ENCODE measurements at regions of chr16 and their contacts with region 1.

Region 1: GRCh38 chr16:88856828-88857733 is at the starts of genes GALNS and TRAPPC2L:
- DNase-seq: peak; percentile 100
- ATAC-seq: peak; percentile 93
- H3K4me3 Mint-ChIP-seq: peak within 1 kb of the TSS; percentile 100
- H3K27ac Mint-ChIP-seq: peak within 1 kb of the TSS; percentile 97
- H3K4me1 Mint-ChIP-seq: peaks cover 22% of the 10 kb centered on the region
- H3K27me3 Mint-ChIP-seq: no peaks in the 10 kb centered on the region
- total RNA-seq, gene GALNS: 20.1 TPM
- total RNA-seq, gene TRAPPC2L: 43.3 to 50.7 TPM

Region 2: GRCh38 chr16:88650749-88651275 is 206.3 kb before region 1 on chr16 and contains the start of gene CYBA:
- CTCF ChIA-PET with region 1: no interaction called
- POLR2A ChIA-PET with region 1: no interaction called
- intact Hi-C with region 1: loop called in 1 of 2 experiments (anchors 1 kb)
- DNase-seq: peak; percentile 92
- ATAC-seq: peak; percentile 87
- H3K4me3 Mint-ChIP-seq: peak within 1 kb of the TSS; percentile 85
- H3K27ac Mint-ChIP-seq: peak within 1 kb of the TSS; percentile 93
- H3K4me1 Mint-ChIP-seq: peaks cover 15% of the 10 kb centered on the region
- H3K27me3 Mint-ChIP-seq: no peaks in the 10 kb centered on the region
- total RNA-seq, gene CYBA: 155 to 200 TPM

Region 3: GRCh38 chr16:88737298-88738150 is 119.6 kb before region 1 on chr16:
- CTCF ChIA-PET with region 1: interaction called, 13 read pairs
- POLR2A ChIA-PET with region 1: no interaction called
- intact Hi-C with region 1: loop called in 1 of 2 experiments (anchors 2 kb)
- DNase-seq: peak; percentile 89
- ATAC-seq: peak; percentile 91
- H3K4me3 Mint-ChIP-seq: no peak overlapping the region
- H3K27ac Mint-ChIP-seq: no peak overlapping the region
- H3K4me1 Mint-ChIP-seq: no peaks in the 10 kb centered on the region
- H3K27me3 Mint-ChIP-seq: no peaks in the 10 kb centered on the region

Region 4: DNA sequence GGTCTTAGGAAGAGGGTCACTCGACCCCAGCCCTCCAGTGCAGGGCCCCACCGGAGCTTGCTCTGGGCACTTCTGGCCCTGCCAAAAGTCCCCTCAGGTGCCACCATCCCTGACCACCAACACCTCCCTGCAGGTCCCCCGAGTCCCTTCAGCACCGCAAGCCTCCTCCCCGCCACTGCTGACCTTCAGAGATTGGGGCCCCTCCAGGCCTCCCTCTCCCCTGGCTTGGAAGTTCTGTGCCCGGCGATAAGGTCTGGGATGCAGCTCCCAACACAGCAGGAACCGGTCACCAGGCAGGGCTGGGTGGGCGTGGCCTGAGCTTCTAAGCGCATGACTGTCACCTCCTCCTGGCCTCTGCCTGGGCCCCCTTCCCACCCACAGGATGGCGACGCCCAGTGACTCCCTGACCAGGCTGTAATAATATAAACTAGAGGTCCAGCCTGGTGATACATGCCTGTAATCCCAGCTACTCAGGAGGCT is 83.2 kb before region 1 on chr16:
- CTCF ChIA-PET with region 1: no interaction called
- POLR2A ChIA-PET with region 1: no interaction called
- intact Hi-C with region 1: no loop called
- DNase-seq: no peak
- ATAC-seq: no peak
- H3K4me3 Mint-ChIP-seq: no peak overlapping the region
- H3K27ac Mint-ChIP-seq: no peak overlapping the region
- H3K4me1 Mint-ChIP-seq: peaks cover 23% of the 10 kb centered on the region
- H3K27me3 Mint-ChIP-seq: no peaks in the 10 kb centered on the region

Region 5: GRCh38 chr16:88811769-88812512 is 45.1 kb before region 1 on chr16 and contains the start of gene APRT:
- CTCF ChIA-PET with region 1: interaction called, 22 read pairs
- POLR2A ChIA-PET with region 1: interaction called, 5 read pairs
- intact Hi-C with region 1: loop called (anchors 1 to 2 kb)
- DNase-seq: peak; percentile 99
- ATAC-seq: peak; percentile 76
- H3K4me3 Mint-ChIP-seq: peak within 1 kb of the TSS; percentile 86
- H3K27ac Mint-ChIP-seq: peak within 1 kb of the TSS; percentile 94
- H3K4me1 Mint-ChIP-seq: peaks cover 22% of the 10 kb centered on the region
- H3K27me3 Mint-ChIP-seq: no peaks in the 10 kb centered on the region
- total RNA-seq, gene APRT: 105 to 179 TPM

Region 6: GRCh38 chr16:89201439-89202377 is 344.6 kb after region 1 on chr16:
- CTCF ChIA-PET with region 1: no interaction called
- POLR2A ChIA-PET with region 1: no interaction called
- intact Hi-C with region 1: loop called in 1 of 2 experiments (anchors 1 kb)
- DNase-seq: peak; percentile 94
- ATAC-seq: peak; percentile 97
- H3K4me3 Mint-ChIP-seq: peak overlapping the region; percentile 44
- H3K27ac Mint-ChIP-seq: no peak overlapping the region
- H3K4me1 Mint-ChIP-seq: peaks cover 13% of the 10 kb centered on the region
- H3K27me3 Mint-ChIP-seq: peaks cover 32% of the 10 kb centered on the region

Region 7: DNA sequence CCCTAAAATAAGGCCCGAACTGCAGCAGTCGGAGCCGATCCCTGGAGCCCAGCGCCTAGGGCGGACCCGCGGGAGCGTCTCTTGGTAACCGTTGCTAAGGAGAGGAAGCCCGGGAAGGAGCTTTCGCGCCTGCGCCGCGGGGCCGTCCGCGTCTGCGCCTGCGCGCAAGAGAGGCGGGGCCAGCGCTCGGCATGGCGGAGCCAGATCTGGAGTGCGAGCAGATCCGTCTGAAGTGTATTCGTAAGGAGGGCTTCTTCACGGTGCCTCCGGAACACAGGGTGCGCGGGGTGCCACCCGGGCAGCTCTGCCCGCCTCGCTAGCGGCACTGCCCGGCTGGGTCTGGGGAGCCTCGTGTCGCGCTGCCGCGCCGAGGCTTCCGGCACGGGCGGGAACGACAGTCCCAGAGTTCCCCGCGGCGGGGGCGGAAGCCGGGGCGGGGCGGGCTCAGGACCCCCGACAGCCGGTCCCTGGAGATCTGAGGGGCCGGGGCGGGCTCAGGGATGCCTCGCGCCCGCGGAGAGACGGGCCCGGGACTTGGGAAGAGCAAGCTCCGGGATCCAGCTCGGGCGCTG is 829.5 kb after region 1 on chr16 and contains the start of gene CDK10:
- CTCF ChIA-PET with region 1: no interaction called
- POLR2A ChIA-PET with region 1: no interaction called
- intact Hi-C with region 1: loop called in 1 of 2 experiments (anchors 1 kb)
- DNase-seq: peak; percentile 92
- ATAC-seq: peak; percentile 90
- H3K4me3 Mint-ChIP-seq: peak within 1 kb of the TSS; percentile 86
- H3K27ac Mint-ChIP-seq: peak within 1 kb of the TSS; percentile 88
- H3K4me1 Mint-ChIP-seq: peaks cover 14% of the 10 kb centered on the region
- H3K27me3 Mint-ChIP-seq: no peaks in the 10 kb centered on the region
- total RNA-seq, gene CDK10: 78.1 to 89.8 TPM

Measured in activated CD4-positive, alpha-beta T cell treated with anti-CD3 and anti-CD28 coated beads for 36 hours (primary cell).